Left cardiac atrium (tissue), 4 donors: ENCODE measurements at regions of chr18 and their contacts with region 1.

Region 1: GRCh38 chr18:76459687-76460350 is 35.2 kb downstream of the ZNF516 start:
- DNase-seq: peak; percentile 68
- ATAC-seq: peak; percentile 76 to 91

Region 2: DNA sequence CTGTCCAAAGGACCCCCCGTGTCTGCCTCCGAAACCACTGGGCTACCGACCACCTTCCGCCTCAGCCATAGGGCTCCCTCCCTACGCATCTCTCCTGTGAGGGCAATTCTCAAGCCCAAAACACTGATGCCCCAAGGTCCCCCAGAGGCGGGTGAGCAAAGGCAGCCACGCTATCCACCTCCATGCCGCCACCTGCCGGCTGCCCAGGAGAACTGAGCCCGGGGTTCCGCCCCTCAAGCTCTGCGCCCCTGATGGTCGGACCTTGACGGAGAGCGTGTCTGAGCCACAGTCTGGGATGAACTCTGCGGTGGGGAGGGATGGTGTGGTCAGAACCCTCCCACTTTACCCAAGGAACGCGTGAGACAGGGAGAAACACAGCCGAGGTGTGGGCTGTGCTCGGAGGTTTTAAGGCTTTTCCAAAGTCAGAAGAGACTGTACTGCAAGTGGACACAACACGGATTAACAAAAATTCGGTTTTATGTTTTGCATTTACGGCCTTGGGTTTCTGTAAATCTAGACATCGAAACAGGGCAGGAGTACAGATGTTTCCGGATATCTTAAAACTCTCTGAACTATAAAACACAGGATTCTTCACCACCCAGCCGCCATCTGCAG is 78.9 kb before region 1 on chr18:
- intact Hi-C with region 1: no loop called
- DNase-seq: no peak
- ATAC-seq: no peak

Region 3: GRCh38 chr18:76492669-76493212 is 32.9 kb after region 1 on chr18:
- intact Hi-C with region 1: loop called in 1 of 2 experiments (anchors 5 kb)
- DNase-seq: peak; percentile 100
- ATAC-seq: peak; percentile 91 to 93